Psoas muscle (tissue), 8 donors: ENCODE measurements at regions of chr11 and their contacts with region 1.

Region 1: GRCh38 chr11:17972987-17973386 is 39.9 kb downstream of the SERGEF start:
- DNase-seq: peak; percentile 50 to 64
- ATAC-seq: peak; percentile 91 to 93 (median 93)
- H3K4me3 ChIP-seq: no peak overlapping the region
- H3K27ac ChIP-seq: no peak overlapping the region
- H3K4me1 ChIP-seq: no peaks in the 10 kb centered on the region
- H3K27me3 ChIP-seq: no peaks in the 10 kb centered on the region
- CTCF ChIP-seq: peak; percentile 63

Region 2: GRCh38 chr11:17852246-17852645 is 120.7 kb before region 1 on chr11:
- intact Hi-C with region 1: loop called (anchors 5 kb)
- DNase-seq: no peak
- ATAC-seq: peak; percentile 70 to 90 (median 84)
- H3K4me3 ChIP-seq: no peak overlapping the region
- H3K27ac ChIP-seq: peak overlapping the region; percentile 13
- H3K4me1 ChIP-seq: peaks cover 23% of the 10 kb centered on the region
- H3K27me3 ChIP-seq: no peaks in the 10 kb centered on the region
- CTCF ChIP-seq: no peak

Region 3: DNA sequence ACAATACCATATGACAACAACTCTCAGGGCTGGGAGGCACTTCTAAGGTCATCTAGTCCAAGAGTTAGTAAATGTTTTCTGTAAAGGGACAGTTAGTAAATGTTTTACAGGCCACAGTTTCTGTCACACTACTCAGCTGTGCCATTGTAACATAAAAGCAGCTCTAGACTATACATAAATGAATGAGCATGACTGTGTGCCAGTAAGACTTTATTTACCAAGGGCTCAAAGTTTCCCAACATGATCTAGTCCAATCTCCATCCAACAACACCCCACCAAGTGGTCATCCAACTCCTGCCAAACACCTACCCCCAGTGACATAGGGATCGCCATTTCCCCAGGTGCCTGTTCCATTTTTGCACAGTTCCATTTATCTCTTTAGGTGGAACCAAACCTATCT is 27.8 kb after region 1 on chr11:
- intact Hi-C with region 1: no loop called
- DNase-seq: no peak
- ATAC-seq: no peak
- H3K4me3 ChIP-seq: no peak overlapping the region
- H3K27ac ChIP-seq: no peak overlapping the region
- H3K4me1 ChIP-seq: no peaks in the 10 kb centered on the region
- H3K27me3 ChIP-seq: no peaks in the 10 kb centered on the region
- CTCF ChIP-seq: no peak

Region 4: GRCh38 chr11:18265949-18266348 is 293.0 kb after region 1 on chr11 and contains the start of gene SAA1:
- intact Hi-C with region 1: no loop called
- DNase-seq: no peak
- ATAC-seq: peak; percentile 15 to 72 (median 47)
- H3K4me3 ChIP-seq: no peak within 1 kb of the TSS
- H3K27ac ChIP-seq: no peak within 1 kb of the TSS
- H3K4me1 ChIP-seq: no peaks in the 10 kb centered on the region
- H3K27me3 ChIP-seq: peaks cover 0 to 4% (median 0%) of the 10 kb centered on the region in 3 donors
- CTCF ChIP-seq: no peak
- total RNA-seq, gene SAA1: 29.1 to 100 (median 36.2) TPM